ENCODE measurements at regions of chr4 and their contacts with region 1.

Region 1: DNA sequence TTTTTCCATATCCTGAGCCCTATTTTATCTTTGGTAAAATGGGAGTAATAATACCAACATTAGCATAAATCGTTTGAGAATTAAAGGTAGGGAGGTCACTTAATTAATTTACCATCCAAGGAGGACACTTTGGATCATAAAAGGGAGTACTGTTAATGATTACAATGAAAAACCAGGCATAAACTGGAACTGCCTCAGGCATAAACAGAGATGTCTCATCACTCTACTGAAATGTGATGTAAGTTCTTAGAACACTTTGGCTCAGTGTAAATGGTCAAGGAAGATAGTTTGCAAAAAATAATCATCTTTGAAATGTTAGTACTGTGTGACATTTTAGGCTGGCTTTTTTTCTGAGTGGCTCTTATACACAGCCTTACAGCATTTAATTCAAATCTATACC is 268.7 kb downstream of the SLC39A8 start:
- DNase-seq: no peak
- ATAC-seq: no peak
- H3K4me3 ChIP-seq: no peak overlapping the region
- H3K4me3 Mint-ChIP-seq: no peak overlapping the region
- H3K27ac ChIP-seq: no peak overlapping the region
- H3K27ac Mint-ChIP-seq: peak overlapping the region; percentile 18
- H3K4me1 ChIP-seq: no peaks in the 10 kb centered on the region
- H3K4me1 Mint-ChIP-seq: peaks cover 1% of the 10 kb centered on the region
- H3K27me3 ChIP-seq: no peaks in the 10 kb centered on the region
- H3K27me3 Mint-ChIP-seq: no peaks in the 10 kb centered on the region
- CTCF ChIP-seq: no peak

Region 2: GRCh38 chr4:101285985-101286384 is 790.6 kb before region 1 on chr4:
- CTCF ChIA-PET with region 1: no interaction called
- POLR2A ChIA-PET with region 1: interaction called, 10 read pairs
- intact Hi-C with region 1: no loop called
- DNase-seq: no peak
- ATAC-seq: no peak
- H3K4me3 ChIP-seq: no peak overlapping the region
- H3K4me3 Mint-ChIP-seq: no peak overlapping the region
- H3K27ac ChIP-seq: peak overlapping the region in 1 of 2 donors; percentile 40
- H3K27ac Mint-ChIP-seq: no peak overlapping the region
- H3K4me1 ChIP-seq: peaks cover 31 to 59% of the 10 kb centered on the region in 2 donors
- H3K4me1 Mint-ChIP-seq: peaks cover 75% of the 10 kb centered on the region
- H3K27me3 ChIP-seq: no peaks in the 10 kb centered on the region
- H3K27me3 Mint-ChIP-seq: no peaks in the 10 kb centered on the region
- CTCF ChIP-seq: no peak

Region 3: DNA sequence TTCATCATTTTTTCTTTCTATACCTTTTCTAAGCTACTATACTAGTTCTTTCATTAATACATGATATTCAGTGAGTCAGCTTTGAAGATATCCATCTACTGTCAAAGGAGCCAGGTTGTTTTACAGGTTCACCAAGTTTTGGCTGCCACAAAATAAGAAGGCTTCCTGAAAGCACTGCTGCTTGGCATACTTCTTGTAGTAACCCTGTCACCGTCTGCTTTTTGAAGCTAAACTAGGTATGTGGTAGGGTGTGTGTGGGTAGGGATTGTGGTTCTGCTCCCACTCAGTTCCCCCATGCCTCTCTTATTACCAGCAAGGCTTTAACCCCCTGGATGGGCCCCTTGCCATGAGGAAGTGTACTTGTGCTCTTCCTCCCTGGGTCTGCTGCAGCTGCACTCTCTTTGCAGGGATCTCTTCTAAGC is 94.9 kb before region 1 on chr4:
- CTCF ChIA-PET with region 1: no interaction called
- POLR2A ChIA-PET with region 1: no interaction called
- intact Hi-C with region 1: no loop called
- DNase-seq: no peak
- ATAC-seq: no peak
- H3K4me3 ChIP-seq: no peak overlapping the region
- H3K4me3 Mint-ChIP-seq: no peak overlapping the region
- H3K27ac ChIP-seq: peak overlapping the region; percentile 2 to 71
- H3K27ac Mint-ChIP-seq: peak overlapping the region; percentile 78
- H3K4me1 ChIP-seq: peaks cover 10 to 31% of the 10 kb centered on the region in 2 donors
- H3K4me1 Mint-ChIP-seq: peaks cover 59% of the 10 kb centered on the region
- H3K27me3 ChIP-seq: no peaks in the 10 kb centered on the region
- H3K27me3 Mint-ChIP-seq: no peaks in the 10 kb centered on the region
- CTCF ChIP-seq: no peak